ENCODE measurements at regions of chr15 and their contacts with region 1.

Region 1: DNA sequence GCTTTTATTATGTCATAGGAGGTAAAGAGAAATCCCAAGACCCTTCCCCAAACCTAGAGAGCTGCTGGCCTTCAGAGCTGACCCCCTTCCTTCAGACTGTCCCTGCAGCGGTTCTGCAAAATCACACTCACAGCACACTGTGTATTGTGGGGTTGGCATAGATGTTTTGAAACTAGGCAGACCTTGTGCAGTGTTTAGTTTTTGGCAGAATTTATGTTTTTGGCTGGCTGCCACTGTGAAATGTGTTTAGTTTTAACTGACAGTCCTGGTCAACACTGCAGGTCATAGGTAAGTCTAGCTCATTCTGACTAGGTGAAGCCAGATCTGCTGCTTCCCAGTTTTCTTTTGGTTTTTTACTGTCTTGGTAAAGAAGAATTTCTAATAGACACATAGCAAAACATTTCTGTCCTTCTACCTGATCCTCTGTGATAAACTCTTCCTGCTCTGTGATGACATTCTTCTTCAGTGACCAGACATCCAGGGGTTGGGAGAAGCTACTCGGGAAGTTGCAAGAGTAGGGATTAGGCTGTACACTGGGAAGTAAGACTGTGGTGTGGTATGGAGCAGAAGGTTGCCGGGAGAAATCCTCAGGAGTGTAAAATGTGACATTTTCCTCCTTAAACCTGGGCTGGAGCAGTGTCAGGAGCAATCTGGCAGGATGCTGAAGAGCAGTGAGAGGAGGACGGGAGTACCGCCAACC is 209.6 kb upstream of the MCTP2 start:
- DNase-seq: no peak
- H3K4me3 ChIP-seq: no peak overlapping the region
- H3K27ac ChIP-seq: no peak overlapping the region
- H3K4me1 ChIP-seq: no peaks in the 10 kb centered on the region
- H3K27me3 ChIP-seq: peaks cover 64% of the 10 kb centered on the region
- CTCF ChIP-seq: no peak

Region 2: DNA sequence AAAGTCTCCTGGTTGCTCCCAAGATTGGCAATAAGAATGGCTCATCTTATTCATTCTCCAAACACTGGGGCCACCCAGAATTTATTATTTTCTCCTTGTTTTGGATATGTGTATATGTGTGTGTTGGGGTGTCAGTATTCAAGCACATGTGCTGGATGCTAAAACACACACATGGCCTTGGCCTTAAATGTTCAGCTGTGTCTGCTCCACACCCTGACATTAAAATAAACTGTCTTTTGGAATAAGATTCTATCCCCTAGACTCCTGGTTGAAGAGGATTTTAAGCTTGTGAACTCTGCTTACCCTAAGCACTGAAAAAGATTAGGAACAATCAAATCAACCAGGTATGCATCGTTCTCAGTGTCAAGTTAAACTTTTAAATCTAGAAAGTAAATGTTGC is 173.3 kb before region 1 on chr15:
- CTCF ChIA-PET with region 1: interaction called, 16 read pairs
- POLR2A ChIA-PET with region 1: no interaction called
- intact Hi-C with region 1: no loop called
- DNase-seq: no peak
- H3K4me3 ChIP-seq: no peak overlapping the region
- H3K27ac ChIP-seq: no peak overlapping the region
- H3K4me1 ChIP-seq: no peaks in the 10 kb centered on the region
- H3K27me3 ChIP-seq: no peaks in the 10 kb centered on the region
- CTCF ChIP-seq: no peak

Region 3: GRCh38 chr15:94317201-94317600 is 295.4 kb after region 1 on chr15:
- CTCF ChIA-PET with region 1: no interaction called
- POLR2A ChIA-PET with region 1: no interaction called
- intact Hi-C with region 1: no loop called
- DNase-seq: no peak
- H3K4me3 ChIP-seq: no peak overlapping the region
- H3K27ac ChIP-seq: no peak overlapping the region
- H3K4me1 ChIP-seq: no peaks in the 10 kb centered on the region
- H3K27me3 ChIP-seq: no peaks in the 10 kb centered on the region
- CTCF ChIP-seq: no peak